CD8-positive, alpha-beta T cell (primary cell): ENCODE measurements at regions of chr19 and their contacts with region 1.

Region 1: DNA sequence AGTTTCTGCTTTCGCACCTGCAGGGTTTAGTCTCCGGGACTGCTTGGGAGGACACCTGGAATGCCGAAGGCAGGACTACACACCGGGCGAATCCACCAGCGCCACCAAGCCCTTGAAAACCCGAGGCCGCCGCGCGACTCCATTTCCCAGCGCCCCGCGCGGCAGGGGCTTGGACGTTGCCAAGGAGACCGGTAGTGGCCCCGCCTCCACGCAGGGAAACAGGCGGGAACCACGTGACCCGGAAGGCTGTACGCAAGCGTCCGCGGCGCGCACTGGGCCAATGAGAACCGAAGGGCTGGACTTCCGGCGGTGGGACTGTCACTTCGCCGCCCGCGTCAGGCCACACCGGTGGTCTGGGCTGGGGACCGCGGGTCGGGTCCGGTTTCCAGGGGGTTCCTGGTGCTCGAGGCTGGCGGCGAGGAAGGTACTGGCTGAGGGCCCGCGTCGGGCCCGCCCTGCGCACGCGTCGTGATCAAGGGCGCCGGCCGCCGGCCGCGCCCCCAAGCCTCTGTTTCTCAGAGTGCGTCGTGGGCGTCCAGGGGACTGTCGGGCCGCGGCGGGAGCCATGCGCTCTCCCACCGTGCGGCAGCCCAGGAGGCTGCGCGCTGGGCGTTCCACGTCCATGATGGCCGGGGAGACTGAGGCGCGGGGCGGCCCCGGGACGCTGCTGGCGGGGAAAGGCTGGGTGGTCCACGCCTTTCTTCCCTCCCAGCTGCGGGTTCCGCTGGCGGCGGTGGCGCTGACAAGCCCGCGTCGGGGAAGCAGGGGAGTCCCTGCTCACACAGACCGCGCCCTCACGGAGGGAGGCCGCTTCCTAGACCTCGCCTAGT is at the start of gene ZNF324:
- DNase-seq: peak; percentile 93 to 99 (median 98)
- ATAC-seq: peak; percentile 88
- H3K4me3 ChIP-seq: peak within 1 kb of the TSS; percentile 63 to 93
- H3K4me3 Mint-ChIP-seq: peak within 1 kb of the TSS; percentile 87
- H3K27ac ChIP-seq: peak within 1 kb of the TSS; percentile 88 to 91
- H3K27ac Mint-ChIP-seq: peak within 1 kb of the TSS; percentile 89
- H3K4me1 ChIP-seq: peaks cover 10% of the 10 kb centered on the region
- H3K4me1 Mint-ChIP-seq: peaks cover 25% of the 10 kb centered on the region
- H3K27me3 ChIP-seq: peaks cover 0 to 3% of the 10 kb centered on the region in 2 experiments
- H3K27me3 Mint-ChIP-seq: no peaks in the 10 kb centered on the region
- CTCF ChIP-seq: no peak
- total RNA-seq, gene ZNF324: 26.9 to 30.5 TPM

Region 2: DNA sequence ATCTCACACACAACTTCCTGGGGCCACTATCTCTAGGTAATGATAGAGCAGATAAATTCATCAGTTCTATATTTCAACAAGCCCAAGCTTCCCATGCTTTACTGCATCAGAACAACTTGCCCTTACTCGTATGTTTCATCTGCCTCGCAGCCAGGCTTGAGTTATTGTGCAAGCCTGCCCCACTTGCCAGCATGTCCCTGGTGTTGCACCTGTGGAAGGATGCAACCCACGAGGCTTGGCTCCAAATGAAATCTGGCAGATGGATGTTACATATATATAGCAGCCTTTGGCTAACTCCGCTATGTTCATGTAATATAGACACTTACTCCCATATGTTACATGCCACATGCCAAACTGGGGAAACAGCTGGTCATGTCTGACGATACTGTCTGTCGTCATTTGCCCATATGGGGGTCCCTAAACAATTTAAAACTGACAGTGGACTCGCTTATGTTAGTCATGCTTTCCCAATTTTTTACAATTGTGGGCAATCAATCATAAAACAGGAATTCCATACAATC is 155.6 kb before region 1 on chr19:
- CTCF ChIA-PET with region 1: no interaction called
- POLR2A ChIA-PET with region 1: no interaction called
- intact Hi-C with region 1: no loop called
- DNase-seq: no peak
- ATAC-seq: no peak
- H3K4me3 ChIP-seq: no peak overlapping the region
- H3K4me3 Mint-ChIP-seq: no peak overlapping the region
- H3K27ac ChIP-seq: no peak overlapping the region
- H3K27ac Mint-ChIP-seq: no peak overlapping the region
- H3K4me1 ChIP-seq: peaks cover 10% of the 10 kb centered on the region
- H3K4me1 Mint-ChIP-seq: peaks cover 31% of the 10 kb centered on the region
- H3K27me3 ChIP-seq: no peaks in the 10 kb centered on the region
- H3K27me3 Mint-ChIP-seq: no peaks in the 10 kb centered on the region
- CTCF ChIP-seq: no peak

Region 3: DNA sequence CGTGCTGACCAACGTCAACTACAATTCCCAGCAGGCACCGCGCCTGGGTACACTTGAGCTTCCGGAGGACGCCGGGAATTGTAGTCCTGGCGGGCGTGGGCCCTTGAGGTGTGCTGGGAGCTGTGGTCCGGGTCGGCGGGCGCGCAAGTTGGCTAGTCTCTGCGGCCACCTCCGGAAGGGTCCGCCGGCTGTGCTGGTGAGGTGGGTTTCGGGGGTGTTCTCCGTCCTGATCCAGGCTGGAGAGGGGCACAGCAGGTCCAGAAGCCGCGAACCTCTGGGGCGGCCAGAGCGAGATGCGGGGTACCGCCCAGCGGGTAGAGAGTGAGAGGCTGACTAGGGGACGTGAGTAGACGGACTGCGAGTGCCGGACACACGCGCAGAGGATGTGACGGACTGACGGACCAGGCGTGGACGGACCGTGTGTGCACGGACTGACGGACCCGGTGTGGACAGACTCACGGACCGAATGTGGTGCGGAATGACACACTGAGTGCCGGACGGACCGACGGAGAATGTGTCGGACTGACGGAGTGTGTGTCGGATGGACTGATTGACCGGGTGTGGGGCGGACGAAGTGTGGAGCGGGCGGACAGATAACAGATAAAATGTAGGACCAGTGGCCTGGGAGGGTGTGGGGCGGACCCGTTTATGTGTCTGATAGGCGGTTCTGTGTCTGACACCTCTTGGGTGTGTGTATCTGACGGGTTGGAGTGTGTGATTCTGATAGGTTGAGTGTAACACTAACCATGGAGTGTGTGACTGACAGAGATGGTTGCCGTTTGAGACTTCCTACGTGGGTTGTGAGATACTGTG is 139.9 kb before region 1 on chr19 and contains the start of gene ZSCAN22:
- CTCF ChIA-PET with region 1: no interaction called
- POLR2A ChIA-PET with region 1: no interaction called
- intact Hi-C with region 1: loop called in 1 of 2 experiments (anchors 2 kb)
- DNase-seq: peak; percentile 76 to 94 (median 89)
- ATAC-seq: peak; percentile 78
- H3K4me3 ChIP-seq: peak within 1 kb of the TSS; percentile 84 to 96
- H3K4me3 Mint-ChIP-seq: no peak within 1 kb of the TSS
- H3K27ac ChIP-seq: peak within 1 kb of the TSS; percentile 77 to 96
- H3K27ac Mint-ChIP-seq: no peak within 1 kb of the TSS
- H3K4me1 ChIP-seq: peaks cover 19% of the 10 kb centered on the region
- H3K4me1 Mint-ChIP-seq: peaks cover 3% of the 10 kb centered on the region
- H3K27me3 ChIP-seq: no peaks in the 10 kb centered on the region
- H3K27me3 Mint-ChIP-seq: no peaks in the 10 kb centered on the region
- CTCF ChIP-seq: no peak
- total RNA-seq, gene ZSCAN22: 1.7 to 2.2 TPM

Region 4: DNA sequence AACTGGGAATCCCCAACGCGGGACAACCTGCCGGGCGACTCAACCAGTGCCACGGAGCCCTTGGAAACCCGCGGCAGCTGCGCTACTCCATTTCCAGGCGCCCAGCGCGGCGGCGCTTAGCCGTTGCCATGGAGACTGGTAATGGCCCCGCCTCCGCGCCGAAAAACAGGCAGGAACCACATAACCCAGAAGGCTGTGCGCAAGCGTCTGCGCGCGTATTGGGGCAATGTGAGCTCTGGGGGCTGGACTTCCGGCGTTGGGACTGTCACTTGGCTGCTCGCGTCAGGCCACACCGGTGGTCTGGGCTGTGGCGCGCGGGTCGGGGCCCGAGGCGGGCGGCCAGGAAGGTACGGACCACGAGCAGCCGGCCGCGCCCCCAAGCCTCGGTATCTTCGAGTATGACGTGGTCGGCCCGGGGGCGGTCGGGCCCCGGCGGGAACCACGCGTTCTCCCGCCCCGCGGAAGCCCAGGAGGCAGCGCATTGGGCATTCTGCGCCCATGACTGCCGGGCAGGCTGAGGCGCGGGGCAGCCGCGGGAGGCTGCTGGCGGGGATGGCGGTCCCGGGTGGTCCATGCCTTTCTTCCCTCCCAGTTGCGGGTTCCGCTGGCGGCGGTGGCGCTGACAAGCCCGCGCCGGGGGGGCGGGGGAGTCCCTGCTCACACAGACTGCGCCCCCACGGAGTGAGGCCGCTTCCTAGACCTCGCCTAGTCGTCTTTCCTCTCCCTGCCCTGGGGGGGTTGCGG is 15.4 kb before region 1 on chr19 and contains the start of gene ZNF324B:
- CTCF ChIA-PET with region 1: no interaction called
- POLR2A ChIA-PET with region 1: interaction called, 3 read pairs
- intact Hi-C with region 1: loop called (anchors 1 kb)
- DNase-seq: peak; percentile 92 to 98 (median 96)
- ATAC-seq: peak; percentile 96
- H3K4me3 ChIP-seq: peak within 1 kb of the TSS; percentile 55 to 83
- H3K4me3 Mint-ChIP-seq: peak within 1 kb of the TSS; percentile 82
- H3K27ac ChIP-seq: peak within 1 kb of the TSS; percentile 44 to 70
- H3K27ac Mint-ChIP-seq: peak within 1 kb of the TSS; percentile 27
- H3K4me1 ChIP-seq: peaks cover 10% of the 10 kb centered on the region
- H3K4me1 Mint-ChIP-seq: peaks cover 16% of the 10 kb centered on the region
- H3K27me3 ChIP-seq: peaks cover 0 to 9% of the 10 kb centered on the region in 2 experiments
- H3K27me3 Mint-ChIP-seq: peaks cover 9% of the 10 kb centered on the region
- CTCF ChIP-seq: no peak
- total RNA-seq, gene ZNF324B: 6.2 to 6.5 TPM

Region 5: GRCh38 chr19:58572818-58573657 is 106.1 kb after region 1 on chr19 and contains the start of gene MZF1:
- CTCF ChIA-PET with region 1: no interaction called
- POLR2A ChIA-PET with region 1: no interaction called
- intact Hi-C with region 1: loop called (anchors 1 kb)
- DNase-seq: peak; percentile 99 to 100 (median 99)
- ATAC-seq: peak; percentile 70
- H3K4me3 ChIP-seq: peak within 1 kb of the TSS; percentile 83 to 84
- H3K4me3 Mint-ChIP-seq: peak within 1 kb of the TSS; percentile 98
- H3K27ac ChIP-seq: peak within 1 kb of the TSS; percentile 98 to 100
- H3K27ac Mint-ChIP-seq: peak within 1 kb of the TSS; percentile 99
- H3K4me1 ChIP-seq: peaks cover 22% of the 10 kb centered on the region
- H3K4me1 Mint-ChIP-seq: peaks cover 30% of the 10 kb centered on the region
- H3K27me3 ChIP-seq: no peaks in the 10 kb centered on the region
- H3K27me3 Mint-ChIP-seq: no peaks in the 10 kb centered on the region
- CTCF ChIP-seq: no peak
- total RNA-seq, gene MZF1: 14.1 to 15.0 TPM